Common myeloid progenitor, CD34-positive (primary cell): ENCODE measurements at regions of chr15 and their contacts with region 1.

Region 1: GRCh38 chr15:72199711-72200212 is 2.2 kb upstream of the GRAMD2A start:
- DNase-seq: peak; percentile 74 to 88 (median 83)
- H3K4me3 ChIP-seq: no peak overlapping the region
- H3K27ac ChIP-seq: no peak overlapping the region
- H3K4me1 ChIP-seq: peaks cover 5 to 17% (median 7%) of the 10 kb centered on the region in 4 experiments
- H3K27me3 ChIP-seq: peaks cover 0 to 26% (median 11%) of the 10 kb centered on the region in 5 experiments

Region 2: DNA sequence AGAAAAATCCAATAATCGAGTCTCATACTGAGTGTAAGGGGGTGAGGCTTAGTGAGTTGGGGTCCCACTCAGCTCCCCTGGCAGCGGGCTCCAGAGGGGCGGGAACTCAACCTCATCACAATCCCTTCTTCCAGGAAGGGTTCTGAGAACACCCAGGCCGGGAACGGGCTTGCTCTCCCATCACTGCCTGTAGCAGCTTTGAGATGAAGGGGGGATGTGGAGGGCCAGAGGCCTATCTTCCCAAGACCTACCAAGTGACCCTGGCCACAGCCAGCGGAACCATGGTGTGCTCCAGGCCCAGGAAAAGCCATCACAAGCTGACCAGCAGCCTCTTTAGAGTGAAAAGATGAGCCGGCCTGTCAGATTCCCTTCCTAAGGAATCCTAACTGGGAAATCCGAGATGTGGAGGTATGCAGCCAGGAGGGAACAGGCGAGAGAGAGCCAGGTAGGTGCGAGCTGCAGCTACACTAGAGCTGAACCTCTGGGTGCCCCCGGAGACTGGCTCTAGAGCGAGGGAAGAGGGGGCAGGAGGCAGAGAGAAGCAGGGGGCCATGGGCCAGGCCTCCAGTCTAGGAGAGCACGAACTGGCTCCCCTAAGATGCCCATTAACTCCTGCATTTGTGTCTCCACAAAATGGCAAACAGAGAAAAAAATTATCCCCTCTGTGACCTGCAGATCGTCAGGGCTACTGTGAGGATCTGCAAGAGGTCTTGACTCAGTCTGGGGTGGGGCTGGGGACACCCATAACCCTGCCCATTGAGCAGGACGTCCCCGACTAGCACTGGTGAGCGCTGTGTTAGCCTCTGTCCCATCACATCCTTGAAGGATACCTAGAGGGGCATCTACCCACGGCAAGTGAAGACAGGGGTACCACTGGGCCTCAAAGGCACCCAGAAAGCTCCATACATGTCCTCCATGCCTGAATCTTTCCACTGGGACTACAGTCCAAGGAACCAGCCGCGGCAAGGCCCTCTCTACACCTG is 20.5 kb before region 1 on chr15:
- CTCF ChIA-PET with region 1: no interaction called
- POLR2A ChIA-PET with region 1: no interaction called
- DNase-seq: no peak
- H3K4me3 ChIP-seq: no peak overlapping the region
- H3K27ac ChIP-seq: no peak overlapping the region
- H3K4me1 ChIP-seq: peaks cover 0 to 6% (median 2%) of the 10 kb centered on the region in 4 experiments
- H3K27me3 ChIP-seq: peaks cover 0 to 20% (median 8%) of the 10 kb centered on the region in 5 experiments

Region 3: DNA sequence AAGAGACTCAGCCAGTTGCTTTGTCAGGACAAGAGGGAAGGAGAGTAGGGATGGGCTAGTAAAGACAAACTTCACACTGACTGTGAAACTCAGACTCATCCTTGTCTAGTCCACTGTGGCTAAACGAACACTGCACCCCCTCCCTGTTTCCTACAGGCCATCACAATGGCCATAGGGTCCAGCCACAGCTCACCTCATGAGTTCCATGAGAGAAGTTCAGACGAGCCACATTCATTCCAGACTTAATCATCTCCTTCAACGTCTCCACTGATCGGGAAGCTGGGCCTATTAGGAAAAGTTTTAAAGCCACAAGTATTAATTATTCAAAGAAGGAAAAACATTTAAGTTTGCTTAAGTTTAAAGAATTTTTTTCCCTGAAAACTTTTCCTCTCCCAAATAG is 17.5 kb after region 1 on chr15:
- CTCF ChIA-PET with region 1: interaction called, 18 read pairs
- POLR2A ChIA-PET with region 1: no interaction called
- DNase-seq: no peak
- H3K4me3 ChIP-seq: no peak overlapping the region
- H3K27ac ChIP-seq: no peak overlapping the region
- H3K4me1 ChIP-seq: peaks cover 1 to 16% (median 9%) of the 10 kb centered on the region in 4 experiments
- H3K27me3 ChIP-seq: no peaks in the 10 kb centered on the region

Region 4: GRCh38 chr15:72222259-72222832 is 22.6 kb after region 1 on chr15:
- CTCF ChIA-PET with region 1: interaction called, 18 read pairs
- POLR2A ChIA-PET with region 1: no interaction called
- DNase-seq: no peak
- H3K4me3 ChIP-seq: no peak overlapping the region
- H3K27ac ChIP-seq: no peak overlapping the region
- H3K4me1 ChIP-seq: peaks cover 9 to 36% (median 21%) of the 10 kb centered on the region in 4 experiments
- H3K27me3 ChIP-seq: no peaks in the 10 kb centered on the region

Region 5: DNA sequence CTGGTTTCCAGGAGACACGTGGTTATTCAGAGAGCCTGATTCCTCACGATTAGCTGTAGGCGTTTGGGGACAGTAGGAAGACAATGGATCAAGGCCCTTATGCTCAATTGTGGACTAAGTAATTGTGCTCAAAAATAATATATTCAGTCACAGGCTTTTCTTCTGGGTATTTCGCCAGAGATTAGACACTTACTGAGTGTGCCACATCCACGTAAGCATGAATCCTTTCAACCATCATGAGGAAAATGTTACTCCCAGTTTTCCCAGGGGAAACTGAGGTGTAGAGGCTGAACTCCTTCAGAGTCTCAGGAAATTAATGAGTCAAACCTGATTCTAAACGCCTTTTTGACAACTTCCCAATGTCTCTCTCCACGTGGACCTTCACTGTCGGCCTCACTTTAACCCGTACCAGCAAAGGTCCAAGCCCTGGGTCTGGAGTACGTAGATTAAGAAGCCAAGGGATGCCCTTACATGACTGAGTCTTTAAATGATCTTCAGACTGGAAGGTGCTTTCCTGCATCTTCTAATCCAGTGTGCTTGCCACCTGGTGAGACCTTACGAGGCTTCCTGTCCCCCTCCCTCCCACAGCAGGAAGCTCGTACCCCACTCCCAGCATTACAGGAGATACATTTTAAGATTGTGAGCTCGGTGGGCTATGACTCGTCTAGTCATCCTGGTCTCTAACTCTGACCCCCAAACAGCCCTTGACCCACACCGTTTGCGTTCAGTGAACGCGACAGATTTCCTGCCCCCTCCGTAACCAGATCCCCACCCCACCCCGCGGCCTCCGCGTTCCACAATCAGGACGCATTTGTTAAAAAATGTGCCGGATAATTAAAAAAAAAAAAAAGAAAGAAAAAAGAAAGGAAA is 29.5 kb after region 1 on chr15:
- CTCF ChIA-PET with region 1: interaction called, 12 read pairs
- POLR2A ChIA-PET with region 1: no interaction called
- DNase-seq: peak in 2 of 3 donors; percentile 52 to 62
- H3K4me3 ChIP-seq: peak overlapping the region; percentile 74 to 94 (median 86)
- H3K27ac ChIP-seq: peak overlapping the region in 1 of 2 experiments; percentile 81
- H3K4me1 ChIP-seq: peaks cover 27 to 60% (median 56%) of the 10 kb centered on the region in 4 experiments
- H3K27me3 ChIP-seq: no peaks in the 10 kb centered on the region

Region 6: DNA sequence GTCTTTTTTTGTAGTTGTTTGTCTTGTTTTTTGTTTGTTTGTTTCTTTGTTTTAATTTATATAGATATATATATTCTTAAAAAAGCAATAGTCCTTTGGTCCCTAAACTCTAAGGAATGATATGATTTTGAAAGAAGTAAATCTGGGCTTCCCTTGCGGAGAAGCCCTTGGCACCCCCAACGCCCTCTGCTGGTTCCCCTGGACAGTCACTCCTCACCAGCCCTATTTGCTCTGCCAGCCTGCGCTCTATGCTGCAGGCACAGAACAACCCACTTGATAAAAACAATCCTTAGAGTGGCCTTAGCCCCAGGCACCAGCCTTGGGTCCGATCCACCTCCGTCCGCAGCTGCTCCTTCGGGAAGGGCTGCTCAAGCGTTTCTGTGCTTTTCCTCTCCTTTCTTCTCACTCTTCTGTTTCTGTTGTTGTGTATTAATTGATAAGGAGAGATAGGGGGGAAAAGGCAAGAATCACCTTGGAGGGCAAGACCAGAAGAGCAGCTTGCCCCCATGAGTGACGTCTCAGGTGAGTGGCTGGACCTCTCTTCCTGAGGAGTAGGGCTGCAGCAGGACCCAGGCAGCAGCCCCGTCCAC is 86.3 kb after region 1 on chr15:
- CTCF ChIA-PET with region 1: interaction called, 82 read pairs
- POLR2A ChIA-PET with region 1: no interaction called
- DNase-seq: peak; percentile 55 to 72 (median 67)
- H3K4me3 ChIP-seq: no peak overlapping the region
- H3K27ac ChIP-seq: no peak overlapping the region
- H3K4me1 ChIP-seq: no peaks in the 10 kb centered on the region
- H3K27me3 ChIP-seq: no peaks in the 10 kb centered on the region